Heart right ventricle (tissue), 16 donors: ENCODE measurements at regions of chr11 and their contacts with region 1.

Region 1: DNA sequence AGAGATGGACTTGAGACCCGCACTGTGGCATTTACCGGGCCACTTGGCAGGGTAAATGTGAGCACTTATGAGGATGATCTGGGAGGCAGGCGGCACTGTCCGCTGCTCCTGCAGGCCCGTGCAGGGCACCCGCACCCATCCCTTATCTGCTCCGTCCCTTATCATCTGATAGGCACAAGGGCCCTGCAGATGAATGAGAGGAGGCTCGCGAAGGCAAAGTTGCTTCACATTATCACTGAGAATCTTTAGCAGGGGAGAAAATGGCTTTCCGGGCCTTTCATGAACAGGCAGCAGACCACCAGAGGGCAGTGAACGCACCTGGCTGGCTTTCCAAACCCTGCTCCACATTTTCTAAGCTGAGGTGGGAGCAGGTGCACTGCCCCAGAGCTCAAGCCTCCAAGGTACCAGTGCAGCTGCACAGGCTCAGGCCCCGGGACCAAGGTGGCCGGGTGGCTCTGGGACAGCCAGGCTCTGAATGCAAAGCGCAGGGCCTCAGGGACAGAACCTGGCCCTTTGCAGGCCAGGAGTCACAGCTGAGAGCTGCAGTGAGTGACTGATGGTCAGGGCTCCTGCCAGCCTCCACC is 165.6 kb downstream of the SHANK2 start:
- DNase-seq: no peak
- ATAC-seq: peak in 2 of 8 donors; percentile 38 to 39
- H3K4me3 ChIP-seq: no peak overlapping the region
- H3K27ac ChIP-seq: no peak overlapping the region
- H3K4me1 ChIP-seq: no peaks in the 10 kb centered on the region
- H3K27me3 ChIP-seq: peaks cover 0 to 11% (median 3%) of the 10 kb centered on the region in 7 donors
- CTCF ChIP-seq: peak in 7 of 9 donors; percentile 39 to 55 (median 43)

Region 2: GRCh38 chr11:71372693-71373657 is 286.2 kb after region 1 on chr11:
- intact Hi-C with region 1: loop called in 1 of 10 experiments (anchors 2 kb)
- DNase-seq: no peak
- ATAC-seq: peak in 1 of 8 donors; percentile 39
- H3K4me3 ChIP-seq: no peak overlapping the region
- H3K27ac ChIP-seq: no peak overlapping the region
- H3K4me1 ChIP-seq: no peaks in the 10 kb centered on the region
- H3K27me3 ChIP-seq: peaks cover 0 to 33% (median 13%) of the 10 kb centered on the region in 7 donors
- CTCF ChIP-seq: peak in 7 of 9 donors; percentile 1 to 40 (median 27)

Region 3: DNA sequence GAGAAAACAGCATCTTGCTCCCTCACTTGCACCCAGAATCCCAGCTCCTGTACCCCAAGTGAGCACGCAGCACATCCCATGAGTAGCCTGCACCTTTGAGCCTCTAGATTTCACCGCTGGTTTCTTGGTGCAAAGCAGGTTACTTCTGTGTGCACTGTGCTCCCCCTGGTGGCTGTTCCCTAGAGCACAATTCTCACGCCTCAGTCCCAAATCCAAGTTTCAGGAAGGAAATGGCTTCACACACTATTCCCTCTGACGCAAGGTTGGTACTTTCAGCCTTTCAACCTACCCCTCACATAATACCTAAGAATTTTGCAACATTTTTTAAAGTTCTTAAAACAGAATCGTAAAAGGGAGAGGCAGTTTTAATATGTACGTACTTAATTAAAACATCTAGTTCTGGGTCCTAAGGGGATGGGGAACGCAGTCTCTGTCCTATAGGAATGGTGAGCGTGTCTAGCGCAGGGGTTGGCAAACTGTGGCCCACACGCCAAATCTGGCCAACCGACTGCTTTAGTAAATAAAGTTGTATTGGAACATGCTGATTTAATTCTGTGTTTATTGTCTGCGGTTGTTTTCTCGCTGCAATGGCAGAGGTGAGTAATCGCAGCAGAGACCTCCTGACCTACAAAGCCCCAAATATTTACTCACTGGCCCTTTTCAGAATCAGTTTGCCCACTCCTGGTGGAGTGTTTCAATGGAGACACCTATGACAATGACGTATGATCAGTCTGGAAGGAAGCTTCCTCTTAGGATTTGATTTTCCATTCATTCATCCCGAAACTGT is 333.9 kb after region 1 on chr11:
- intact Hi-C with region 1: loop called in 1 of 10 experiments (anchors 2 kb)
- DNase-seq: no peak
- ATAC-seq: peak in 4 of 8 donors; percentile 37 to 53 (median 42)
- H3K4me3 ChIP-seq: no peak overlapping the region
- H3K27ac ChIP-seq: no peak overlapping the region
- H3K4me1 ChIP-seq: no peaks in the 10 kb centered on the region
- H3K27me3 ChIP-seq: peaks cover 0 to 8% (median 0%) of the 10 kb centered on the region in 7 donors
- CTCF ChIP-seq: peak in 8 of 9 donors; percentile 31 to 63 (median 58)